Transverse colon (tissue), 4 donors: ENCODE measurements at regions of chrX and their contacts with region 1.

Region 1: GRCh38 chrX:77118686-77119085 is 328.5 kb upstream of the FGF16 start:
- DNase-seq: no peak
- H3K4me3 ChIP-seq: no peak overlapping the region
- H3K27ac ChIP-seq: no peak overlapping the region
- H3K4me1 ChIP-seq: no peaks in the 10 kb centered on the region
- H3K27me3 ChIP-seq: no peaks in the 10 kb centered on the region
- CTCF ChIP-seq: no peak
- EP300 ChIP-seq: no peak
- POLR2A ChIP-seq: no peak

Region 2: DNA sequence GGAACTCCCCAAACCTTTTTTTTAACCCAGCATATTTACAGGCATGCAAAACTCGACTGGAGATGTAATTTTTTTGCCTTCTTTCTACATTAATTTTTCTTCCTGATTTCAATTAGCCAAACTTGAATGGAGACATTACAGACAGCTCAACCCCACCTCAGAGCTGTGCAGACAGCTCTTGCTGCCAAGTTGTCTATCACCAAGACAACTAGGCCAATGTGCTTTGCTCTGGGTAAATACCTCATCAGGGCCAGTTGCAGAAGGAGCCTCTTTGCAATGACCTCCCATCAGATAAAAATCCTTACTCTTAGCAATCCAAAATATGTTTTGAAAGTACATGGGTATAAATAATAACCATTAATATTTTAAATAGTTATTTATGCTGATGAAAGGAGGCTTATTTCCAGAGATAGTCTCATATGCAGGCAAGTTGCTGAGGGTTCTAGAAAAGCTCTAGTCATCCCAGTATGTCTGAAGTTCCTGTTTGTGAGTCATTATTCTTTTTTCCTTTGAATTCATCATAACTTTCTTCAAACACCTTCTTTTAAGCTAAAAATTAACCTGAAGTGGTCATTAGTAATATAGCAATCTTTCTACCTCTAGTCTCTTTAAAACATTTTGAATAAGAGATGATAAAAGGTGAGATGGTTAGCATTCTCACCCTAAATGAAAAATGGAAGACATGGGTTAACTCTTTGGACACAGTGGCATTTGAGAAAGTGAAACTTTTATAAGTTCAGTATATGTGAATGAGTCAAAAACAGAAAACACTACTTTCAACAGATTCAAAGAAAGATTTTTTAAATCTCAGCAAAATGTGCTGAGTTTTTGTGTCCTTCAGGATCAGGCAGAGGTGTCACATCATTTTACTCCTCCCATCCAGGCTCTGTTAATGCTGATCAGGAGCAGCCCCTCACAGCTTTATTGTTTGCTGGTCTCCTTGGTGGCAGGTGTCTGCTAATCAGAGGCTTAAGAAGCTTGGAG is 147.0 kb before region 1 on chrX:
- in situ Hi-C with region 1: no loop called
- intact Hi-C with region 1: no loop called
- DNase-seq: no peak
- H3K4me3 ChIP-seq: no peak overlapping the region
- H3K27ac ChIP-seq: no peak overlapping the region
- H3K4me1 ChIP-seq: no peaks in the 10 kb centered on the region
- H3K27me3 ChIP-seq: no peaks in the 10 kb centered on the region
- CTCF ChIP-seq: no peak
- EP300 ChIP-seq: no peak
- POLR2A ChIP-seq: no peak

Region 3: DNA sequence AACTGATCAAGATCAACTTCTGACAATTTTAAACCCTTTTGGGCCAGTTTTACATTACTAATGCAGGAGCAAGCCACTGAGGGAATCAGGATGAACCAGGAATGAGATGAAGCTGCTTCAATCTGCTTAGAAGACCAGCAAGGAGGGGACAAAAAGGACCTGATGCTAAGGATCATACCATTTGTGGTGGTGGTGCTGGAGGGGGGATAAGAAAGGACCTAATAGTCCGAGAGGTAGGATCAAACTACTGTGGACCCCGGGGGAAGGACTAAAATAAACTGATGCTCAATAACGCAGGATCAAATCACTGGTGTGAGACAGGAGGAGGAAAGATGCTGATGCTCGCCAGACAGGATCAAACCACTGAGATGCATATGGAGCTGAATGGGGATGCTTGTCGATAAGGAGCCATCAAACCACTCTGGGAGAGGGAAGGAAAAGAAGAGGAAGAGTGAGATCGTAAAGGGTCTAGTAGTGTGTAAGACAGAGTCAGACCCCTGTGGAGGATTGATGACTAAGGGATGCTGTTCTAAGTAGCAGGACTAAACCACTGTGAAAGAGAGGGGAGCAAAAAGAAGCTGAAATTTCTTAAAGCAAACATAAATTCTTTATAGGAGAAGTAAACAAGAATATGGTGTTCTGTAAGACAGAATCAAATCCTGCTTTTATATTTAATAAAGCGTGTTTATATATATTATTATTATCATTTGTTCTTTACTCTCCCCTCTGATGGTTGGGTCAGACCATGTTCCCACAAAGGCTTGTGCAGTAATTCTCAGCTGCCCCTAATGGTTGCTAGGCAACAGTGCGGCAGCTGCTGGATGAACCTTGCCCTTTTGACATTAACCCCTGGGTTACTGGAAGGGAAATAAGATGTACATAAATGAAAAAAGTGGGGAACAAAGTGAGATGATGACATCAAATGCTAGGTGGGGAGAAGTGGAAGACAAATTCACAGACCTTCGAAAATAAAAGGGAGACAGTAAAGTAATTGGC is 104.0 kb before region 1 on chrX:
- in situ Hi-C with region 1: loop called in 1 of 4 experiments (anchors 25 kb)
- intact Hi-C with region 1: no loop called
- DNase-seq: no peak
- H3K4me3 ChIP-seq: no peak overlapping the region
- H3K27ac ChIP-seq: no peak overlapping the region
- H3K4me1 ChIP-seq: no peaks in the 10 kb centered on the region
- H3K27me3 ChIP-seq: no peaks in the 10 kb centered on the region
- CTCF ChIP-seq: no peak
- EP300 ChIP-seq: no peak
- POLR2A ChIP-seq: no peak